ENCODE measurements at regions of chr10 and their contacts with region 1.

Region 1: GRCh38 chr10:77710759-77711682 is 73.4 kb upstream of the KCNMA1 start:
- DNase-seq: no peak
- ATAC-seq: peak; percentile 79
- H3K4me3 ChIP-seq: peak overlapping the region; percentile 65
- H3K27ac ChIP-seq: peak overlapping the region; percentile 21
- H3K4me1 ChIP-seq: peaks cover 21% of the 10 kb centered on the region
- H3K27me3 ChIP-seq: no peaks in the 10 kb centered on the region
- CTCF ChIP-seq: peak; percentile 97 to 99 (median 99)
- EP300 ChIP-seq: no peak
- POLR2A ChIP-seq: no peak
- RAD21 ChIP-seq: peak; percentile 91

Region 2: GRCh38 chr10:77173615-77174461 is 537.2 kb before region 1 on chr10:
- CTCF ChIA-PET with region 1: interaction called, 340 read pairs
- POLR2A ChIA-PET with region 1: interaction called, 3 read pairs
- RAD21 ChIA-PET with region 1: interaction called, 59 read pairs
- SMC1A ChIA-PET with region 1: interaction called, 82 read pairs
- in situ Hi-C with region 1: loop called (anchors 5 kb)
- intact Hi-C with region 1: loop called (anchors 2 kb)
- DNase-seq: peak; percentile 28
- ATAC-seq: peak; percentile 84
- H3K4me3 ChIP-seq: no peak overlapping the region
- H3K27ac ChIP-seq: no peak overlapping the region
- H3K4me1 ChIP-seq: no peaks in the 10 kb centered on the region
- H3K27me3 ChIP-seq: no peaks in the 10 kb centered on the region
- CTCF ChIP-seq: peak; percentile 80 to 96 (median 81); a peak in 5 of 6 replicates
- EP300 ChIP-seq: no peak
- POLR2A ChIP-seq: no peak
- RAD21 ChIP-seq: peak; percentile 96

Region 3: DNA sequence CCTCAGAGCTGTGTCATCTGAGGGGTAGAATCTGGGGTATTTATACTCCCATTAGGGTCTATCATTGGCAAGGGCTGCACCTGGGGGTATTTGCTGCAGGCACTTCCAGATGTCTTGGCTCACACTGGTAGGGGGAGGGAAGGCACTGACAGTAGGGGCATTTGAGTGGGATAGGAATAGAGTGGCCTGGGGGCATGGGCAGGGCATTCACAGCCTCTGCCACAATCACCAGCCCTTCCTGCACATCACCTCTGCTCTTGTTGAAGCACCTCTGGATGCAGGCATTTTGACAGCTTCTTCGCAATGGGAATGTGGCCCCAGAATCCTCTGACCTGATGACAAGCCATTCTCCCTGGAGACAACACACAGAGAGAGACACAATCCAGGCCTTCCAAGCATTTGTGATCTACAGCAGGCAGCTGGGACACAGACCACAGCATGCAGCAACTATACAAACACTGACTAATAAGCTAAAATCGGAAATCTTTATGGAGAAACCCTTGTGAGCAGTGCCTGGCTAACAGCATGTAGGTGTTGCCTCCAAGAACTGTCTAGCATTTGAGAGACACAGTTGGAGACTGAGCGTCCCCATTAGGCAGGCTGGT is 251.9 kb before region 1 on chr10:
- CTCF ChIA-PET with region 1: interaction called, 5 read pairs
- POLR2A ChIA-PET with region 1: no interaction called
- RAD21 ChIA-PET with region 1: interaction called, 12 read pairs
- SMC1A ChIA-PET with region 1: interaction called, 7 read pairs
- in situ Hi-C with region 1: no loop called
- intact Hi-C with region 1: no loop called
- DNase-seq: no peak
- ATAC-seq: no peak
- H3K4me3 ChIP-seq: no peak overlapping the region
- H3K27ac ChIP-seq: no peak overlapping the region
- H3K4me1 ChIP-seq: no peaks in the 10 kb centered on the region; the same call in 1 of the 2 replicates
- H3K27me3 ChIP-seq: no peaks in the 10 kb centered on the region
- CTCF ChIP-seq: no peak
- EP300 ChIP-seq: no peak
- POLR2A ChIP-seq: no peak
- RAD21 ChIP-seq: no peak

Region 4: DNA sequence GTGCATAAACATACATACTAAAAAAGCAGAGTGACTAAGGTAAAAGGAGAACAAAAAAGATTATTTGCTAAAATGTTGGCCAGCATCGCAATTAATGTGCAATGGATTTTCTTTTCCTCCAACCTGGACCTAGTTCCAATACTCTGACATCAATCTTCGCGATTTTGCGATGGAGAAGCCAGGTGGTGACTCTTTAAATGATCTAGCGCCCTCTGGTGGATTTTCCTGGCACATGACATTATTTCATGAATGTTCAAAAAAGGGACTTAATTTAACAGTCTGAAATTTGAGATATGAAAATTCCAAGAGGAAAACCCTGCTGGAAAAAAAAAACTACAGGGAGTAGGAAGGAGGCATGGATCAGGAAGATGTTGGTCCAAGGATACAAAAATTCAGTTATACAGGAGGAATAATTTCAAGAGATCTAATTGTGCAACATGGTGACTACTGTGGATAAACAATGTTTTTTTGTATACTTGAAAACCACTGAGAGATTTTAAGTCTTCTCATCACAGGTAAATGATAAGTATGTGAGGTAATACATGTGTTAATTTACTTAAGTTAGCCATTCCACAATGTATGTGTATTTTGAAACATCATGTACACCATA is 69.1 kb before region 1 on chr10:
- CTCF ChIA-PET with region 1: interaction called, 403 read pairs
- POLR2A ChIA-PET with region 1: interaction called, 13 read pairs
- RAD21 ChIA-PET with region 1: interaction called, 290 read pairs
- SMC1A ChIA-PET with region 1: interaction called, 291 read pairs
- in situ Hi-C with region 1: no loop called
- intact Hi-C with region 1: loop called (anchors 1 kb)
- DNase-seq: no peak
- ATAC-seq: peak; percentile 27
- H3K4me3 ChIP-seq: no peak overlapping the region
- H3K27ac ChIP-seq: no peak overlapping the region
- H3K4me1 ChIP-seq: 0 out of 2 replicates have a peak, but pooled peaks cover 2% of the 10 kb centered on the region
- H3K27me3 ChIP-seq: no peaks in the 10 kb centered on the region; a peak in 1 of 4 replicates
- CTCF ChIP-seq: peak; percentile 58 to 81 (median 72); a peak in 5 of 6 replicates
- EP300 ChIP-seq: no peak
- POLR2A ChIP-seq: no peak
- RAD21 ChIP-seq: peak; percentile 92

Region 5: GRCh38 chr10:77673101-77673500 is 37.9 kb before region 1 on chr10:
- CTCF ChIA-PET with region 1: interaction called, 32 read pairs
- POLR2A ChIA-PET with region 1: no interaction called
- RAD21 ChIA-PET with region 1: interaction called, 7 read pairs
- SMC1A ChIA-PET with region 1: interaction called, 16 read pairs
- in situ Hi-C with region 1: no loop called
- intact Hi-C with region 1: loop called (anchors 5 kb)
- DNase-seq: no peak
- ATAC-seq: no peak
- H3K4me3 ChIP-seq: no peak overlapping the region
- H3K27ac ChIP-seq: no peak overlapping the region
- H3K4me1 ChIP-seq: no peaks in the 10 kb centered on the region; the same call in 1 of the 2 replicates
- H3K27me3 ChIP-seq: no peaks in the 10 kb centered on the region
- CTCF ChIP-seq: no peak
- EP300 ChIP-seq: no peak
- POLR2A ChIP-seq: no peak
- RAD21 ChIP-seq: no peak

Region 6: DNA sequence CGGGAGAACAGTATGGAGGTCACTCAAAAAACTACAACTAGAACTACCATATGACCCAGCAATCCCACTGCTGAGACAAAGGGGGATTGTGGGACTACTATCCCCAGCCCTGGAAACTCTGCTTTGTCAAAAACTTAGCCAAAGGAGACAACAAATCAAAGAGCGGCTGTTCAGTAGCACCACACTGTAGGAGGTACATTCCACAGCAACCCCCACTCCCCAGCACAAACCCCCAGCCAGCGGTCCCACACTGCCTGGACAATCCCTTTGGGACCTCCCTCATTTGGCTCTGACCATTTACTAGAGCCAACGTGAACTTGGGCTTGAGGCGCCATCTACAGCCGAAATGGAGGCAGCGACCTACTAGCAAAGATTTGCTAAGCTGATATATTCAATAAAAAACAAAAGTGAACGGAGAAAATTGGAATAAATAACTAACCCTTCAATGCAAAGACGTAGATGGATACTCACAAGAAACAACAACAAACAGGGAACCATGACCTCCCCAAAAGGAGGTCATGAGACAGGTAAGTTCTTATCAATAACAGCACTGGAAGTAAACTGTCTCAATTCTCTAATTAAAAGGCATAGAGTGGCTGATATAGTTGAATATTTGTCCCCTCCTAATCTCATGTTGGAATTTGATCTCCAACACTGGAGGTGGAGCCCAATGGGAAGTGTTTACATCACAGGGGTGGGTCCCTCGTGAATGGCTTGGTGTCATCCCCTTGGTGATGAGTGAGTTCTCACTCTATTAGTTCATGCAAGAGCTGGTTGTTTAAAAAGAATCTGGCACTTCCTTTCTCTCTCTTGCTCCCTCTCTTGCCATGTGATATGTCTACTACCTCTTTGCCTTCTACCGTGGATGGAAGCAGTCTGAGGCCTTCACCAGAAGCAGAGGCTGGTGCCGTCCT is 45.6 kb after region 1 on chr10:
- CTCF ChIA-PET with region 1: interaction called, 27 read pairs
- POLR2A ChIA-PET with region 1: interaction called, 4 read pairs
- RAD21 ChIA-PET with region 1: interaction called, 12 read pairs
- SMC1A ChIA-PET with region 1: interaction called, 14 read pairs
- in situ Hi-C with region 1: no loop called
- intact Hi-C with region 1: loop called (anchors 1 kb)
- DNase-seq: no peak
- ATAC-seq: peak; percentile 96
- H3K4me3 ChIP-seq: no peak overlapping the region
- H3K27ac ChIP-seq: no peak overlapping the region
- H3K4me1 ChIP-seq: no peaks in the 10 kb centered on the region
- H3K27me3 ChIP-seq: no peaks in the 10 kb centered on the region; a peak in 1 of 4 replicates
- CTCF ChIP-seq: peak; percentile 79 to 82 (median 80)
- EP300 ChIP-seq: no peak
- POLR2A ChIP-seq: no peak
- RAD21 ChIP-seq: peak; percentile 75

Measured in GM12878 (cell line).